Ovary (tissue), 10 donors: ENCODE measurements at regions of chr15 and their contacts with region 1.

Region 1: GRCh38 chr15:79981831-79982455 is 10.9 kb upstream of the BCL2A1 start:
- DNase-seq: no peak
- H3K4me3 ChIP-seq: no peak overlapping the region
- H3K27ac ChIP-seq: no peak overlapping the region
- H3K4me1 ChIP-seq: peaks cover 8% of the 10 kb centered on the region
- H3K27me3 ChIP-seq: no peaks in the 10 kb centered on the region
- CTCF ChIP-seq: no peak
- EP300 ChIP-seq: no peak
- POLR2A ChIP-seq: no peak

Region 2: DNA sequence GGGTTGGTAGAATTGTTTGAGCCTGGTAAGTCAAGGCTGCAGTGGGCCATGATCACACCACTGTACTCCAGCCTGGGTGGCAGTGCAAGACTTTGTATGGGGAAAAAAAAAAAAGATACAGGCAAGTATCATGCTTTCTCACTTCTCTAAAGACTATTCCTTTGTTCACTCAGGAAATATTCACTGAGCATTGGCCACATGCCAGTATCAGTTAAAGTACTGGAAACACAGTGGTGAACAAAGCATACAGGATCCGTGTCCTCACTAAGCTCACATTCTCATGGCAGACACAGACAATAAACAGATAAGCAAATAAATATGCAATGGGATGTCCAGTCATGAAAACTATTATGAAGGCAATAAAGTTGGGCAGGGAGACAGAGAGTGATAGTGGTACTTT is 80.0 kb before region 1 on chr15:
- intact Hi-C with region 1: loop called in 1 of 4 experiments (anchors 10 kb)
- DNase-seq: no peak
- H3K4me3 ChIP-seq: no peak overlapping the region
- H3K27ac ChIP-seq: no peak overlapping the region
- H3K4me1 ChIP-seq: no peaks in the 10 kb centered on the region
- H3K27me3 ChIP-seq: no peaks in the 10 kb centered on the region
- CTCF ChIP-seq: no peak
- EP300 ChIP-seq: no peak
- POLR2A ChIP-seq: no peak

Region 3: DNA sequence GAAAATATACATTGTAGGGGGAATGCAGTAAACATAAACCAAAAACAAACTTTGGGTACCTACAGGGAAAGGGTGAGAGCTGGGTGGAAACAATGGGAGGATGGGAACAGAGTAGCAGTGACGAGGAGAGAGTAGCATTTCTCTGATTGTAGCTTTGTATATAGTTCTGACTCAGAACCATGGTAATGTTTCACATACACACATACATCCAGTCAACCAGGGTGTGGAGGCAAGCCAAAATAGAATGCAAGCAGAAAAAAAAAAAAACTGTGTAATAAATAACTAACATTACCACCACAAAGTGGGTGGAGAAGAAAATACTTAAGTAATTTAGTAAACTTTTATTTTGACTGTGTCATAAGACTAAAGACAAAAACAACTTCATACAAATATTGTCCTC is 38.1 kb before region 1 on chr15:
- intact Hi-C with region 1: no loop called
- DNase-seq: no peak
- H3K4me3 ChIP-seq: no peak overlapping the region
- H3K27ac ChIP-seq: no peak overlapping the region
- H3K4me1 ChIP-seq: no peaks in the 10 kb centered on the region
- H3K27me3 ChIP-seq: no peaks in the 10 kb centered on the region
- CTCF ChIP-seq: no peak
- EP300 ChIP-seq: no peak
- POLR2A ChIP-seq: no peak